ENCODE measurements at regions of chr6 and their contacts with region 1.

Region 1: GRCh38 chr6:56292505-56293181 is 45.3 kb upstream of the COL21A1 start:
- DNase-seq: peak; percentile 79
- ATAC-seq: peak; percentile 82
- H3K4me3 ChIP-seq: no peak overlapping the region
- H3K27ac ChIP-seq: no peak overlapping the region
- H3K4me1 ChIP-seq: peaks cover 9% of the 10 kb centered on the region
- H3K27me3 ChIP-seq: no peaks in the 10 kb centered on the region
- CTCF ChIP-seq: peak; percentile 87

Region 2: DNA sequence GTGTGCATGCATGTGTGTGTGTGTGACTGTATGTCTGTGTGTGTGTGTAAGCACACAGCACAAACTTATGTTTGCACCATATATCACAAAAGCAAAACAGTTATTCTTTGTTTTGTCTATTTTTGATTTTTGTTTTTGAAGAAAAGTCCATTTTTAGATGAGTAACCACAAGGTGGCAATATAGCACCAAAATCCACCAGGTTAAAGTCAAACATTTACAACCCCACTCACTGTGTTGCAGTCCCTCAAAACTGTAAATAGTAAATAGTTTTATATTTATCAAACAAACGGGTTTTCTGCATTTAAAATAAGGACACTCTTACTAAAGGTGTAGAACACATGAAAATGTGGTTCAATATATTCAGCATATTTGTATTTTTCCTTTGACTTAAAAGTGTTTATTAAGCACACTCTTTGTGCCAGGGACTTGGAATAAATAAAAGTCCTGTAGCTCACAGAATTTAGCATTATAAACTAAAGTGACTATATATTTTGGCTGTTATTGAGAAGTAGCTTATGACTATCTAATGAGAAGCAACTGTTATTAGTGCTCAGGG is 846.9 kb before region 1 on chr6:
- CTCF ChIA-PET with region 1: no interaction called
- POLR2A ChIA-PET with region 1: no interaction called
- intact Hi-C with region 1: loop called (anchors 10 kb)
- DNase-seq: peak; percentile 58
- ATAC-seq: no peak
- H3K4me3 ChIP-seq: no peak overlapping the region
- H3K27ac ChIP-seq: no peak overlapping the region
- H3K4me1 ChIP-seq: no peaks in the 10 kb centered on the region
- H3K27me3 ChIP-seq: peaks cover 9% of the 10 kb centered on the region
- CTCF ChIP-seq: peak; percentile 80

Region 3: DNA sequence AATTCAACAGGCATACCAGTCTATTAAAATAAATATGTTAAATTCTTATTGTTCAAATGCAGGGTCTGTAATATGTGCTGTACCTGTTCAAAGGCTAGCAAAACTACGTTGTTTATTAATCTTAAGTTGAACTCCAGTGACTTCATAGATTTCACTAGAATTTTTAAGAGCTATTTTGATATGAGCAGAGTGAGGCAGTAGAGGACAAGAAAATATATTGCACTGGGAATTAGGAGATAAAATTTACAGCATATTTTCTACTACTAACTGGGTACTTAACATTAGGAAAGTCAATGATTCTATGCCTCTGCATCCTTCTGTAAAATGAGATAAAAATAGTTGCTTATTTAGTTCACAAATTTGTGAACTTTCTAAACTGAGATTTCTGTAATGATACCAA is 255.0 kb before region 1 on chr6:
- CTCF ChIA-PET with region 1: interaction called, 4 read pairs
- POLR2A ChIA-PET with region 1: no interaction called
- intact Hi-C with region 1: loop called (anchors 1 kb)
- DNase-seq: no peak
- ATAC-seq: no peak
- H3K4me3 ChIP-seq: no peak overlapping the region
- H3K27ac ChIP-seq: no peak overlapping the region
- H3K4me1 ChIP-seq: peaks cover 7% of the 10 kb centered on the region; the same call in 1 of the 2 replicates
- H3K27me3 ChIP-seq: no peaks in the 10 kb centered on the region
- CTCF ChIP-seq: peak; percentile 29; the same call in 1 of the 2 replicates

Region 4: GRCh38 chr6:56168596-56168995 is 124.0 kb before region 1 on chr6:
- CTCF ChIA-PET with region 1: no interaction called
- POLR2A ChIA-PET with region 1: no interaction called
- intact Hi-C with region 1: loop called (anchors 5 kb)
- DNase-seq: peak; percentile 36
- ATAC-seq: peak; percentile 29
- H3K4me3 ChIP-seq: no peak overlapping the region
- H3K27ac ChIP-seq: peak overlapping the region; percentile 52
- H3K4me1 ChIP-seq: peaks cover 12% of the 10 kb centered on the region
- H3K27me3 ChIP-seq: no peaks in the 10 kb centered on the region
- CTCF ChIP-seq: no peak